HEK293 (cell line): ENCODE measurements at regions of chr19 and their contacts with region 1.

Region 1: DNA sequence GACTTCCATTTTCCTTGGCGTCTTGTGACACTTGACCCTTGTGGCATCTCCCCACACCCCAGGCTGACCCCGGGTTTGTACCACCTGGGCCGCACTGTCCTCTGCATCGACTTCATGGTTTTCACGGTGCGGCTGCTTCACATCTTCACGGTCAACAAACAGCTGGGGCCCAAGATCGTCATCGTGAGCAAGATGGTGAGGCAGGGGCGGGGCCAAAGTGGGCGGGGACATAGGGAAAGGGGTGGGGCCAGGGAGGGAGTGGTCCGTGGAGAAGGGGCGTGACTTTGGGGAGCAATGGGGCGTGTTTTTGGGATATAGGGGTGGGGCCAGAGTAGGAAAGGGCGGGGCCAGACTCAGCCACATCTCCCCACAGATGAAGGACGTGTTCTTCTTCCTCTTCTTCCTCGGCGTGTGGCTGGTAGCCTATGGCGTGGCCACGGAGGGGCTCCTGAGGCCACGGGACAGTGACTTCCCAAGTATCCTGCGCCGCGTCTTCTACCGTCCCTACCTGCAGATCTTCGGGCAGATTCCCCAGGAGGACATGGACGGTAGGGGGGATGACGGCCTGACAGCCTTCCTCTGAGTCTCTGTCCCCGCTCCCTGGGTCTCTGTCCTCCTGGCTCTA is 42.8 kb downstream of the TRPM4 start:
- H3K4me3 ChIP-seq: no peak overlapping the region
- H3K27ac ChIP-seq: no peak overlapping the region
- H3K4me1 ChIP-seq: no peaks in the 10 kb centered on the region
- CTCF ChIP-seq: no peak

Region 2: GRCh38 chr19:49073514-49074378 is 126.6 kb before region 1 on chr19:
- CTCF ChIA-PET with region 1: interaction called, 16 read pairs
- POLR2A ChIA-PET with region 1: no interaction called
- H3K4me3 ChIP-seq: no peak overlapping the region
- H3K27ac ChIP-seq: no peak overlapping the region
- H3K4me1 ChIP-seq: no peaks in the 10 kb centered on the region
- CTCF ChIP-seq: peak; percentile 66

Region 3: GRCh38 chr19:49106648-49107135 is 93.7 kb before region 1 on chr19:
- CTCF ChIA-PET with region 1: interaction called, 28 read pairs
- POLR2A ChIA-PET with region 1: no interaction called
- H3K4me3 ChIP-seq: no peak overlapping the region
- H3K27ac ChIP-seq: no peak overlapping the region; the same call in 1 of the 2 replicates
- H3K4me1 ChIP-seq: no peaks in the 10 kb centered on the region
- CTCF ChIP-seq: peak; percentile 81

Region 4: GRCh38 chr19:49119411-49120324 is 80.7 kb before region 1 on chr19 and contains the start of gene PPFIA3:
- CTCF ChIA-PET with region 1: interaction called, 24 read pairs
- POLR2A ChIA-PET with region 1: interaction called, 5 read pairs
- H3K4me3 ChIP-seq: peak within 1 kb of the TSS; percentile 54
- H3K27ac ChIP-seq: peak within 1 kb of the TSS; percentile 82; the same call in 1 of the 2 replicates
- H3K4me1 ChIP-seq: peaks cover 8% of the 10 kb centered on the region
- CTCF ChIP-seq: no peak

Region 5: DNA sequence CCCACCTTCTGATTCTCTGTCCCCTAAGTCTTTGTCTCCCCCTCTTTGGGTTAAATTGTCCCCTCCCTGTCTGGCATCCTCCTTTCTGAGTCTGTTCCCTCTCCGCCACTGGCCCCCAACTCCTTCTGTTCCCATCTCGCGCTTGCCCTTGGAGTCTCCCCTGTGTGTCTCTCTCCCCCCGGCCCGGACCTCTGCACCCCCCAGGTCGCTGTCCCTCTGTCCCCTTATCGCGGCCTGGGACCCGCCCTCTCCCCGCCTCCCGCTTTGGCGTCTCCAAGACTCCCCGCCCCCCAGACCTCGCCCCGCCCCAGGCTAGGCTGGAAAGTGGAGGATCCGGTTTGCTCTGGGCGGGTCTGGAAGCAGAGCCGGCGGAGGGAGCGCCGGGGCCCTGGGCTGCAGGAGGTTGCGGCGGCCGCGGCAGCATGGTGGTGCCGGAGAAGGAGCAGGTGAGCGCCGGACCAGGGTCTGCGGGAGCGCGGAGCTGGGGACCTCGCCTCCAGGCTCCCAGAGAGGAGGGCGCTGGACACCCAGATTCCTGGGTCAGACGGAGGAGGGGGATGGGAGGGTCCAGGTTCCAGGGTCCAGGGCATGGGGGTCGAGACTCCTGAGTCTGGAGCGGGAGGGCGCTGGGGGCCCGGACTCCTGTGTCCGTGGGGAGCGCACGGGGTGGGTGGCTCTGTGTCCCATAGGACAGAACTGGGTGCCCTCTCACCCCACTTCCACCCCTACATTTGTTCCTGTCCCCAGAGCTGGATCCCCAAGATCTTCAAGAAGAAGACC is 42.7 kb before region 1 on chr19 and contains the start of gene TRPM4:
- CTCF ChIA-PET with region 1: interaction called, 13 read pairs
- POLR2A ChIA-PET with region 1: interaction called, 3 read pairs
- H3K4me3 ChIP-seq: peak within 1 kb of the TSS; percentile 81
- H3K27ac ChIP-seq: peak within 1 kb of the TSS; percentile 47; the same call in 1 of the 2 replicates
- H3K4me1 ChIP-seq: peaks cover 7% of the 10 kb centered on the region
- CTCF ChIP-seq: no peak

Region 6: DNA sequence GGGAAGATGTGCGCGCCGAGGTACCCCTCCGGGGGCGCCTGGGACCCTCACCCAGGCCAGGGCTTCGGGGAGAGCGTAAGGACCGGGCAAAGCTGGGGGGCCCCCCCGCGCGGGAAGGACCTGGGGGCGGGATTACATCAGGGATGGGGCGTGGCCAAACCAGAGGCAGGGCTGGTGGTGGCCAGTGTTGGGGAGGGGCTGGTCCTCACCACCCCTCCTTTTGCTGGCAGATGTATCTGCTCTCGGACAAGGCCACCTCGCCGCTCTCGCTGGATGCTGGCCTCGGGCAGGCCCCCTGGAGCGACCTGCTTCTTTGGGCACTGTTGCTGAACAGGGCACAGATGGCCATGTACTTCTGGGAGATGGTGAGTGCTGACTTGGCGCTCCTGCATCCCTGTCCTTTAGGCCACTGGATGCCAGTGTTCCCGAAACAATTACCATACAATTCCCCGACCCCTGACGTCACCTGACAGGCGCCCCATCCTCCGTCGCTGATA is 17.5 kb before region 1 on chr19:
- CTCF ChIA-PET with region 1: interaction called, 73 read pairs
- POLR2A ChIA-PET with region 1: interaction called, 4 read pairs
- H3K4me3 ChIP-seq: no peak overlapping the region
- H3K27ac ChIP-seq: no peak overlapping the region
- H3K4me1 ChIP-seq: no peaks in the 10 kb centered on the region
- CTCF ChIP-seq: no peak

Region 7: DNA sequence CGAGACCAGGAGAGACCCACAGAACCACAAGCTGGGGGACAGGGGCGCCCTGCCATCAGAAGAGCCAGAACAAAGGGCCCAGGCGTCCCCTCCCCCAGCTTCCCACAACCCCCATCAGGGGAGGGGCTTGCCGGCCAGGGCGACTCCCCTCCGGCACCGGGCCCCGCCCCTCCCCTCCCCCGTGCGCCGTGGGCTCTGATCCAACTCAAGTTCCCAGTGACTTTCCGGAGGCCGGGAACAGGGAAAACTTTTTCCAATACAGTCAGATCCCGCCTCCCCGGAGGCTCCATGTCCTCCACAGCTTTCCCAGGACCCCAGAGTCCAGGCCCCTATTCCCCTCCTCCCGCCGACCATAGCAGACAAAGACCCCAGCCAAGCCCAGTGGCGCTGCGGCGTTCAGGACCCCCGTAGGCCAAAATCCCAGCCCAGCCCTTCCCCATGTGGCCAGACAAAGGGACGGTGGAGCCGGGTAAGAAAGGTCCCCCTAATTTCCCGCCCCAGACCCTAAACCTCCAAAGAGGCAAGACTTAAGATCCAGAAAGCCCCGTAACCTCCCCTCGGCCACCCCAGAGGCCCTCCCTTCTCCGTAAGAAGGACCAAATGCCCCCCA is 161.2 kb after region 1 on chr19:
- CTCF ChIA-PET with region 1: no interaction called
- POLR2A ChIA-PET with region 1: no interaction called
- H3K4me3 ChIP-seq: peak overlapping the region; percentile 77
- H3K27ac ChIP-seq: peak overlapping the region; percentile 83
- H3K4me1 ChIP-seq: peaks cover 14% of the 10 kb centered on the region
- CTCF ChIP-seq: no peak